ENCODE measurements at regions of chr3 and their contacts with region 1.

Region 1: GRCh38 chr3:196440041-196440537 is 7.9 kb upstream of the UBXN7 start:
- DNase-seq: peak; percentile 39
- H3K4me3 ChIP-seq: no peak overlapping the region
- H3K27ac ChIP-seq: peak overlapping the region; percentile 77
- H3K27me3 ChIP-seq: no peaks in the 10 kb centered on the region
- CTCF ChIP-seq: no peak

Region 2: GRCh38 chr3:196344663-196345062 is 95.4 kb before region 1 on chr3:
- CTCF ChIA-PET with region 1: no interaction called
- POLR2A ChIA-PET with region 1: no interaction called
- DNase-seq: no peak
- H3K4me3 ChIP-seq: no peak overlapping the region
- H3K27ac ChIP-seq: no peak overlapping the region
- H3K27me3 ChIP-seq: no peaks in the 10 kb centered on the region
- CTCF ChIP-seq: no peak

Region 3: GRCh38 chr3:196486263-196486662 is 46.2 kb after region 1 on chr3:
- CTCF ChIA-PET with region 1: no interaction called
- POLR2A ChIA-PET with region 1: interaction called, 11 read pairs
- DNase-seq: no peak
- H3K4me3 ChIP-seq: no peak overlapping the region
- H3K27ac ChIP-seq: no peak overlapping the region
- H3K27me3 ChIP-seq: no peaks in the 10 kb centered on the region
- CTCF ChIP-seq: peak; percentile 22; the same call in 1 of the 2 replicates

Region 4: GRCh38 chr3:196513697-196514349 is 73.7 kb after region 1 on chr3:
- CTCF ChIA-PET with region 1: no interaction called
- POLR2A ChIA-PET with region 1: no interaction called
- DNase-seq: no peak
- H3K4me3 ChIP-seq: no peak overlapping the region
- H3K27ac ChIP-seq: no peak overlapping the region
- H3K27me3 ChIP-seq: no peaks in the 10 kb centered on the region
- CTCF ChIP-seq: no peak

Region 5: DNA sequence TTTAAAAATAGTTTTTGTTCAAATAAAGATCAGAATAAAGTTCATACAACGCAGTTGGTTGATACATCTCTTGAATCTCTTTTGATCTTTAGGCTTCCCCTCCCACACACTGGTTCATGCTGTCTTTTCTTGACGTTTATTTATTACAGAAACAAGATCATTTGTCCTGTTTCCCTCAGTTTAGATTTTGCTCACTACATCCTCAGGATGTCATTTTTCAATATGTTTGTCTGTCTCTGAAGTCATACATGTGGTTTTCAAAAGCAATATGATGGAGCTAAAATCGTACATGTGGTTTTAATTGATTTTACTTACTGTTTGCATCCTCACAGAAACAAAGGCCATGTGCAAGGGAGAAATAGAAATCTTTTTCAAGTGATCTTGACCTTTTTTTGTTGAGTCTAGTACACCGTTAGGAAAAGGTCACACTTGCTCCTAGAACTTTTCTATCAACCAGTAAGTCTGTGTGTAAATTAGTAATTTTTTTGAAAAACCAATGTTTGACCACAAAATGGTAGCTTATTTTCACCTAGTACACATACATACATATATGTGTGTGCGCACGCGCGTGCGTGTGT is 363.9 kb after region 1 on chr3:
- CTCF ChIA-PET with region 1: no interaction called
- POLR2A ChIA-PET with region 1: no interaction called
- DNase-seq: no peak
- H3K4me3 ChIP-seq: no peak overlapping the region
- H3K27ac ChIP-seq: no peak overlapping the region
- H3K27me3 ChIP-seq: no peaks in the 10 kb centered on the region
- CTCF ChIP-seq: no peak

Region 6: DNA sequence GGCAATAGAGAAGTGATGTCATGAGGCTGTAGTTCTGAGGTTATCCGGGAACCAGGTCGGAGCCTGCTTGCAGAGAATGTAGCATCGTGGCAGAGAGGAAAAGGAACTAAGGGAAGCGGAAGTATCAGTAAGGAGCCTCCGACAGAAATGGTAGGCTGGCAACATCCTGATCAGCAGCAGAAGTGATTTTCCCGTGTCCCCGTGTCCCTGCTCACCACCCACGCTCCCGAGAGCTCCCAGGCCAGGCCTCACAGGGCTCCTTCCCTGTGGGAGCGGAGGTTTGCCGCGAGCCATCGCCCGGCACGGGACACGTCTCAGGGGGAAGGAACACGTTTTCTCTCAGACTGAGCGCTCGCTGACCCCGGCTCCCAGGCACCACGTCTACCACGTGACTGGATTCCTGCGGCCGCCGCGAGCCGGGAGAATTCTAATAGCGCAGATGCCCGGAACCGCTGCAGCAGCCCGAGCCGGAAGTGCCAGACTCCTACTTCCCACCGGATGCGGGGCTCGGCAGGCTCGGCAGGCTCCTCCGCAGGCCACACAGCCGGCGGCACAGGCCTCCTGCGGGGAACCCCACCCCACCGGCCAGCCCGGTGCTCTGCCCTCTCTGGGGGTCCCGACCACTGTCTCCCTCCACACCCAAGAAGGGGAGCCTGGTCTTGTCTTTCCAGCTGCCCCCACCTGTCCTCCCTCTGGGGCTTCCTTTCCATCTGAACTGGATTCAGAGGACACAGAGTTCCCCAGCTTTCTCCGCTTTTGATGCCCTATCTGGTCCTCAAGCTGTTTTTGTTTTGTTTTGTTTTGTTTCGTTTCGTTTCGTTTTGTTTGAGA is 1016.4 kb after region 1 on chr3:
- CTCF ChIA-PET with region 1: no interaction called
- POLR2A ChIA-PET with region 1: no interaction called
- DNase-seq: peak; percentile 75
- H3K4me3 ChIP-seq: peak overlapping the region; percentile 56
- H3K27ac ChIP-seq: peak overlapping the region; percentile 70
- H3K27me3 ChIP-seq: peaks cover 3% of the 10 kb centered on the region
- CTCF ChIP-seq: no peak